ENCODE measurements at regions of chr5 and their contacts with region 1.

Region 1: GRCh38 chr5:157948738-157949410 is 89.9 kb upstream of the CLINT1 start:
- DNase-seq: peak; percentile 94 to 95
- H3K4me3 ChIP-seq: no peak overlapping the region
- H3K27ac ChIP-seq: peak overlapping the region in 1 of 3 donors; percentile 4
- H3K4me1 ChIP-seq: peaks cover 0 to 5% of the 10 kb centered on the region in 2 donors
- H3K27me3 ChIP-seq: no peaks in the 10 kb centered on the region
- CTCF ChIP-seq: peak; percentile 61 to 92 (median 90)
- POLR2A ChIP-seq: no peak

Region 2: GRCh38 chr5:157820593-157821252 is 128.2 kb before region 1 on chr5:
- intact Hi-C with region 1: loop called (anchors 5 kb)
- DNase-seq: peak; percentile 12 to 33
- H3K4me3 ChIP-seq: no peak overlapping the region
- H3K27ac ChIP-seq: peak overlapping the region in 2 of 3 donors; percentile 11 to 26
- H3K4me1 ChIP-seq: peaks cover 15 to 28% of the 10 kb centered on the region in 2 donors
- H3K27me3 ChIP-seq: no peaks in the 10 kb centered on the region
- CTCF ChIP-seq: peak; percentile 23 to 70 (median 41)
- POLR2A ChIP-seq: no peak

Region 3: GRCh38 chr5:157858527-157859226 is 90.2 kb before region 1 on chr5 and contains the start of gene CLINT1:
- intact Hi-C with region 1: loop called (anchors 10 kb)
- DNase-seq: peak; percentile 90 to 93
- H3K4me3 ChIP-seq: peak within 1 kb of the TSS; percentile 62 to 88 (median 87)
- H3K27ac ChIP-seq: peak within 1 kb of the TSS; percentile 60 to 94 (median 94)
- H3K4me1 ChIP-seq: peaks cover 5 to 20% of the 10 kb centered on the region in 2 donors
- H3K27me3 ChIP-seq: no peaks in the 10 kb centered on the region
- CTCF ChIP-seq: no peak
- POLR2A ChIP-seq: peak; percentile 43 to 90
- total RNA-seq, gene CLINT1: 126 to 198 (median 159) TPM

Region 4: GRCh38 chr5:157917899-157918809 is 30.7 kb before region 1 on chr5:
- intact Hi-C with region 1: no loop called
- DNase-seq: peak; percentile 66 to 72
- H3K4me3 ChIP-seq: no peak overlapping the region
- H3K27ac ChIP-seq: peak overlapping the region; percentile 59 to 99 (median 87)
- H3K4me1 ChIP-seq: peaks cover 66 to 73% of the 10 kb centered on the region in 2 donors
- H3K27me3 ChIP-seq: no peaks in the 10 kb centered on the region
- CTCF ChIP-seq: peak in 3 of 6 experiments; percentile 40 to 44 (median 42)
- POLR2A ChIP-seq: no peak

Region 5: GRCh38 chr5:158070859-158071258 is 122.0 kb after region 1 on chr5:
- intact Hi-C with region 1: no loop called
- DNase-seq: peak in 1 of 2 donors; percentile 4
- H3K4me3 ChIP-seq: no peak overlapping the region
- H3K27ac ChIP-seq: no peak overlapping the region
- H3K4me1 ChIP-seq: no peaks in the 10 kb centered on the region
- H3K27me3 ChIP-seq: no peaks in the 10 kb centered on the region
- CTCF ChIP-seq: no peak
- POLR2A ChIP-seq: no peak

Measured in thyroid gland (tissue), 4 donors.